AG04450 (cell line): ENCODE measurements at regions of chr11 and their contacts with region 1.

Region 1: DNA sequence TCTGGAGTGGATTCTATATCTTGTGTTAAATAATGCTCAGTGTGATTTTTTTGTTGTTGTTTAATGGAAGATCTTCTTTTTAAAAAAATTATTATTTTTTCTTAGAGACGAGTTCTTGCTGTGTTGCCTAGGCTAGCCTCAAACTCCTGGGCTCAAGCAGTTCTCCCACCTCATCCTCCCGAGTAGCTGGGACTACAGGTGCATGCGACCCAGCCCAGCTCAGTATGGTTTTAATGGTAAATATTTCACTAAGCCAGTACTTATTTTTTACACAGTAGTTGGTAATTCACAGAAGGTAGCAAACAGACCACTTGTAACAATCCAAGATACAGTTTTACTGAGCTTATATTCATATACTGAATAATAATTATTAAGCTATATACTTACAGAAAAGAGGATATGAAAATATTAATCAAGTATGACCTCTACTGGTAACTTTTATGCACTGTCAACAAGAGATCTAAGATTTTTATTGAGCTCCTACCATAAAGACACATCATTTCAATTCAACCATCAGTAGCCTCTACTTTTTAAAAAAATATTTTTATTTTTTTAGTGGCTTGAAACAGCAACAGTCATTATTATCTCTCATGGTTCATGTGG is 6.1 kb upstream of the CD59 start:
- DNase-seq: no peak
- H3K4me3 ChIP-seq: no peak overlapping the region
- H3K27ac ChIP-seq: no peak overlapping the region
- H3K27me3 ChIP-seq: no peaks in the 10 kb centered on the region
- CTCF ChIP-seq: peak; percentile 50

Region 2: DNA sequence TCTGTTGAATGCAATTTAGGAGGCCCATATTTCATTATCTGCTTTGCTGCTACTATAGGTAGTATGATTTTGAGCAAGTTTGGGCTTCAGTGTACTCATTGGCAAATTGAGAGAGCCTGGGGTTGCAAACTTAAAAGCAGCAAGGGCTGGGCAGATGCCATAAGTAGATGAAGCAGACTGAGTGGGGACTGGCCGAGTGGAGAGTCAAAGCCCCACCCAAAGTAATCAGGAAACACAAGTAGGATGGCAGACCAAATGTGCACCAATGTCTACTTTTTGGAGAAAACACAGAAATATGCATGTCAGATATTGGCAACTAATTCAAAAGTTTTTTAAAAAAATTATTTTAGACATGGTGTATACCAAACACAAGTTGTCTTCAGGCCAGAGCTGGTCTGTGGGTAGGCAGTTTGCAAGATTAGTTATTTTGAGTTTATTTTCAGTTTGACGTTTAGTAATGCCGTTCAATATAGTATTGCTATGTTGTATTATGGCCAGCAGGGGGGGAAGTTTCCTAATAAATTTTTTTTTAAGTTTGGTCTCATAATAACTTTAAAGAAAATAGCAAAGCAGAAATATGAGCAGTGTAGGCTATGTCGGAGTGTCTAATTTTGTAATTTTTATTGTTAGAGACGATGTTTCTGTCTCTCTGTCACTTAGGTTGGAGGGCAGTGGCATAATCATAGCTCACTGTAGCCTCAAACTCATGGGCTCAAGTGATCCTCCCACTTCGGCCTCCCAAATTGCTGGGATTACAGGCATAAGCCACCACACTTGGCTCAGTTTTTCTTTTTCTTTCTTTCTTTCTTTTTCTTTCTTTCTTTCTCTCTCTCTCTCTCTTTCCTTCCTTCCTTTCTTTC is 380.1 kb before region 1 on chr11:
- CTCF ChIA-PET with region 1: interaction called, 22 read pairs
- POLR2A ChIA-PET with region 1: interaction called, 3 read pairs
- DNase-seq: no peak
- H3K4me3 ChIP-seq: no peak overlapping the region
- H3K27ac ChIP-seq: no peak overlapping the region
- H3K27me3 ChIP-seq: no peaks in the 10 kb centered on the region
- CTCF ChIP-seq: peak; percentile 52

Region 3: GRCh38 chr11:33643167-33643824 is 99.1 kb before region 1 on chr11:
- CTCF ChIA-PET with region 1: no interaction called
- POLR2A ChIA-PET with region 1: no interaction called
- DNase-seq: no peak
- H3K4me3 ChIP-seq: no peak overlapping the region
- H3K27ac ChIP-seq: no peak overlapping the region
- H3K27me3 ChIP-seq: no peaks in the 10 kb centered on the region
- CTCF ChIP-seq: no peak

Region 4: GRCh38 chr11:33687733-33688479 is 54.4 kb before region 1 on chr11:
- CTCF ChIA-PET with region 1: interaction called, 36 read pairs
- POLR2A ChIA-PET with region 1: interaction called, 7 read pairs
- DNase-seq: no peak
- H3K4me3 ChIP-seq: no peak overlapping the region
- H3K27ac ChIP-seq: no peak overlapping the region
- H3K27me3 ChIP-seq: no peaks in the 10 kb centered on the region
- CTCF ChIP-seq: peak; percentile 82

Region 5: GRCh38 chr11:33709466-33709865 is 32.9 kb before region 1 on chr11:
- CTCF ChIA-PET with region 1: interaction called, 42 read pairs
- POLR2A ChIA-PET with region 1: no interaction called
- DNase-seq: no peak
- H3K4me3 ChIP-seq: no peak overlapping the region
- H3K27ac ChIP-seq: no peak overlapping the region
- H3K27me3 ChIP-seq: no peaks in the 10 kb centered on the region
- CTCF ChIP-seq: no peak

Region 6: GRCh38 chr11:33753304-33753967 is 11.1 kb after region 1 on chr11:
- CTCF ChIA-PET with region 1: interaction called, 17 read pairs
- POLR2A ChIA-PET with region 1: no interaction called
- DNase-seq: peak; percentile 30
- H3K4me3 ChIP-seq: no peak overlapping the region
- H3K27ac ChIP-seq: no peak overlapping the region
- H3K27me3 ChIP-seq: no peaks in the 10 kb centered on the region
- CTCF ChIP-seq: no peak